ENCODE measurements at regions of chr1 and their contacts with region 1.

Region 1: GRCh38 chr1:99737016-99737415 is 29.4 kb downstream of the FRRS1 start:
- DNase-seq: peak; percentile 77
- ATAC-seq: peak; percentile 100
- H3K4me3 ChIP-seq: no peak overlapping the region
- H3K27ac ChIP-seq: no peak overlapping the region
- H3K4me1 ChIP-seq: no peaks in the 10 kb centered on the region
- H3K27me3 ChIP-seq: no peaks in the 10 kb centered on the region
- CTCF ChIP-seq: peak; percentile 72
- POLR2A ChIP-seq: no peak
- RAD21 ChIP-seq: peak; percentile 81

Region 2: GRCh38 chr1:98884864-98885263 is 852.2 kb before region 1 on chr1:
- CTCF ChIA-PET with region 1: no interaction called
- POLR2A ChIA-PET with region 1: no interaction called
- dilution Hi-C with region 1: no loop called
- in situ Hi-C with region 1: no loop called
- intact Hi-C with region 1: loop called (anchors 10 kb)
- DNase-seq: no peak
- ATAC-seq: no peak
- H3K4me3 ChIP-seq: no peak overlapping the region
- H3K27ac ChIP-seq: no peak overlapping the region
- H3K4me1 ChIP-seq: no peaks in the 10 kb centered on the region
- H3K27me3 ChIP-seq: no peaks in the 10 kb centered on the region
- CTCF ChIP-seq: no peak
- POLR2A ChIP-seq: no peak
- RAD21 ChIP-seq: 0 out of 2 replicates have a peak, but pooled peaks have one; percentile 12